Natural killer cell (primary cell): ENCODE measurements at regions of chr4 and their contacts with region 1.

Region 1: DNA sequence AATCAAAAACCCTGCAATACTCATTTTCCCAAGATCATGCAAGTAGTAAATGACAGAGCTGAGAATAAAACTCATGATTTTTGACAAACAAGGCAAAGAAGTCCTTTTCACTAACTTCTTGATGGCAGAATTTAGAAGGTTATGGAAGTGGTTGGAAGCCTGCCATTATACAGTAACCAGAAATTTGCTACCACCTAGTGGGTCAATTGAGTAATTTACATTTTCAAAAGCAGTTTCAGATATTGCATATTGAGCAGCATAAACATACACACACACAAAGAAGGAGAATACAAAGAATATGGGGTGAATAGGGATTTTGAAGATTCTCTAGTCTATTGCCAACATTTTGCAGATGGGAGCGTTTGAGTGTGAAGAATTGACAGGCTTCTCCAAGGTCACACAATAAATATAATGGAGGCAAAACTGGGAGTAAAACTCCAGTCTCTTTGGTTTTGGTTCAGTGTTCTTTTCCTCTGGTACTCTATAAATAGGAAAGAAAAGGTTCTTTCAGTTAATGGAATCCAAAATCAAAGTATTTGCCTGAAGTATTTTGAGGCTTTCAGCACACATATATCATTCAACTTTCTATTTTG is 70.2 kb downstream of the GC start:
- DNase-seq: peak in 1 of 2 donors; percentile 56
- ATAC-seq: peak; percentile 41 to 65 (median 59)
- H3K4me3 ChIP-seq: no peak overlapping the region
- H3K4me3 Mint-ChIP-seq: no peak overlapping the region
- H3K27ac ChIP-seq: no peak overlapping the region
- H3K27ac Mint-ChIP-seq: no peak overlapping the region
- H3K4me1 ChIP-seq: no peaks in the 10 kb centered on the region
- H3K4me1 Mint-ChIP-seq: no peaks in the 10 kb centered on the region
- H3K27me3 ChIP-seq: no peaks in the 10 kb centered on the region
- H3K27me3 Mint-ChIP-seq: peaks cover 3 to 28% of the 10 kb centered on the region in 2 donors
- CTCF ChIP-seq: peak; percentile 55

Region 2: DNA sequence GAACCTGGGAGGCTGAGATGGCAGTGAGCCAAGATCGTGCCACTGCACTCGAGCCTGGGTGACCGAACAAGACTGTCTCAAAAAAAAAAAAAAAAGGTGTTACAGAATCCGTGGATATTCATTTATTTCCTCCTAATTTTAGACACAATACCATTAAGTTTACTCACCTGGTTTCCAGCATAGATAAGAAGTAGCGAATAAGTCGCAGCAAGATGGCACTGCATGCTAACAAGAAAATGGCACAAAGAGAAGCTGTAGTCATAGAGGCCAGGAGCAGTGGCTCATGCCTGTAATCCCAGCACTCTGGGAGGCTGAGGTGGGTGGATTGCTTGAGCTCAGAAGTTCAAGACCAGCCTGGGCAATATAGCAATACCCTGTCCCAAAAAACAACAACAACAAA is 828.5 kb before region 1 on chr4:
- intact Hi-C with region 1: loop called (anchors 5 kb)
- DNase-seq: no peak
- ATAC-seq: no peak
- H3K4me3 ChIP-seq: no peak overlapping the region
- H3K4me3 Mint-ChIP-seq: no peak overlapping the region
- H3K27ac ChIP-seq: no peak overlapping the region
- H3K27ac Mint-ChIP-seq: no peak overlapping the region
- H3K4me1 ChIP-seq: no peaks in the 10 kb centered on the region
- H3K4me1 Mint-ChIP-seq: no peaks in the 10 kb centered on the region
- H3K27me3 ChIP-seq: no peaks in the 10 kb centered on the region
- H3K27me3 Mint-ChIP-seq: peaks cover 0 to 18% of the 10 kb centered on the region in 2 donors
- CTCF ChIP-seq: no peak

Region 3: DNA sequence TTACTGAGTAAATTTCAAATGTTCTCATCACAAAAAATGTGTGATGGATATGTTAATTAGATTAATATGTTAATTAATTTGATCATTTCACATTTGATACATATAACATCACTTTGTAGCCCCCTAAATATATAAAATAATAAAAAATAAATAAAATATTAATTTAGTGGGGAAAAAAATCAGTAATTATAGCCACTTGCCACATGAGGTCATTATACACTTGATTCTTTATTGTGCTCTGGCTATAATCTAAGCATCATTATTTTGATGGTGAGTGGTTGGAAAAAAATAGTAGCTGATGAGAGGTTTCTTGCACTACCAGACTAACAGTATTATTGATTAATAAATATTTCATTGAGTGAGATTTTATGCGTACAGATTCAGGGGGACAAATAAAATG is 662.9 kb before region 1 on chr4:
- intact Hi-C with region 1: loop called (anchors 2 kb)
- DNase-seq: peak in 1 of 2 donors; percentile 24
- ATAC-seq: peak in 1 of 3 donors; percentile 54
- H3K4me3 ChIP-seq: no peak overlapping the region
- H3K4me3 Mint-ChIP-seq: no peak overlapping the region
- H3K27ac ChIP-seq: no peak overlapping the region
- H3K27ac Mint-ChIP-seq: no peak overlapping the region
- H3K4me1 ChIP-seq: no peaks in the 10 kb centered on the region
- H3K4me1 Mint-ChIP-seq: no peaks in the 10 kb centered on the region
- H3K27me3 ChIP-seq: no peaks in the 10 kb centered on the region
- H3K27me3 Mint-ChIP-seq: no peaks in the 10 kb centered on the region
- CTCF ChIP-seq: peak; percentile 48

Region 4: GRCh38 chr4:71194454-71194853 is 519.3 kb before region 1 on chr4:
- intact Hi-C with region 1: no loop called
- DNase-seq: no peak
- ATAC-seq: no peak
- H3K4me3 ChIP-seq: no peak overlapping the region
- H3K4me3 Mint-ChIP-seq: no peak overlapping the region
- H3K27ac ChIP-seq: no peak overlapping the region
- H3K27ac Mint-ChIP-seq: no peak overlapping the region
- H3K4me1 ChIP-seq: peaks cover 4% of the 10 kb centered on the region
- H3K4me1 Mint-ChIP-seq: peaks cover 29 to 31% of the 10 kb centered on the region in 2 donors
- H3K27me3 ChIP-seq: no peaks in the 10 kb centered on the region
- H3K27me3 Mint-ChIP-seq: no peaks in the 10 kb centered on the region
- CTCF ChIP-seq: no peak

Region 5: GRCh38 chr4:71229477-71230270 is 484.0 kb before region 1 on chr4:
- intact Hi-C with region 1: loop called (anchors 1 kb)
- DNase-seq: peak in 1 of 2 donors; percentile 13
- ATAC-seq: peak in 2 of 3 donors; percentile 47 to 62
- H3K4me3 ChIP-seq: no peak overlapping the region
- H3K4me3 Mint-ChIP-seq: no peak overlapping the region
- H3K27ac ChIP-seq: no peak overlapping the region
- H3K27ac Mint-ChIP-seq: no peak overlapping the region
- H3K4me1 ChIP-seq: no peaks in the 10 kb centered on the region
- H3K4me1 Mint-ChIP-seq: peaks cover 18 to 23% of the 10 kb centered on the region in 2 donors
- H3K27me3 ChIP-seq: no peaks in the 10 kb centered on the region
- H3K27me3 Mint-ChIP-seq: no peaks in the 10 kb centered on the region
- CTCF ChIP-seq: peak; percentile 39